ENCODE measurements at regions of chr2 and their contacts with region 1.

Region 1: GRCh38 chr2:105114551-105114950 is 76.7 kb downstream of the MRPS9 start:
- DNase-seq: no peak
- ATAC-seq: peak in 1 of 2 donors; percentile 56
- H3K4me3 ChIP-seq: no peak overlapping the region
- H3K27ac ChIP-seq: no peak overlapping the region
- H3K4me1 ChIP-seq: no peaks in the 10 kb centered on the region
- H3K27me3 ChIP-seq: no peaks in the 10 kb centered on the region
- CTCF ChIP-seq: peak; percentile 24 to 74 (median 49)
- POLR2A ChIP-seq: no peak

Region 2: DNA sequence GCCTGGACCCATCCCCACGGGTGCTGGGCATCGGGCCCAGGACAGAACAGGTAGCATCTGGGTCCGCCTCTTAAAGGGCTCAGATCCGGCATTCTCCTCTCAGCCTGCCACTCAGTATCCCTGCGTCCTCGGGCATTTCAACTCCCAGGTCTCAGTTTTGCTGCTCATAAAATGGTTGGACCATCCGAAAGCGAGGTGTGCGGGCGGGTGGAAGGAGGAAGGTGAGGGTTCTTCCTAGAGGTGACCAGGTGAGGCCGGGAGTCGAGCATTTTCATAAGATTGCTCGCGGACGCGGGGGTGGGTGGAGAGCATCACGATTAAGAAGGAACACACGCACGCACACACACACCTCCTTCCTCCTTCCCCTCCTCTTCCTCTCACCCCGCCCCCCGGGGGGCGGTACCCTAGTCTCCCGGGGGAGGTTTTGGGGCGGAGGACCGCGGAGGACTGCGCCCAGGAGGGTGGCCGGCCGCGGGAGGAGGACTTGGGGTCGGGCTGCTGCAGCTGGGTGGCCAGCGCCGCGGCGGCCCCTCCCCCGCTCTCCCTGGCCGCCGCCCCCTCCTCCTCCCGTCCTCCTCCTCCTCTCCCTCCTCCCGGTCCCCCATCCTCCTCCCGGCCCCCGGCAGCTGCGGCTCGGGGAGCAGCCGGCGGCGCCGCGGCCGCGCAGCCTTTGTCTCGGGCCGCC is 29.1 kb after region 1 on chr2:
- in situ Hi-C with region 1: no loop called
- intact Hi-C with region 1: no loop called
- DNase-seq: no peak
- ATAC-seq: no peak
- H3K4me3 ChIP-seq: peak overlapping the region in 1 of 4 donors; percentile 17
- H3K27ac ChIP-seq: no peak overlapping the region
- H3K4me1 ChIP-seq: peaks cover 0 to 3% of the 10 kb centered on the region in 2 donors
- H3K27me3 ChIP-seq: peaks cover 26 to 34% (median 30%) of the 10 kb centered on the region in 3 donors
- CTCF ChIP-seq: no peak
- POLR2A ChIP-seq: no peak

Region 3: GRCh38 chr2:105235388-105236054 is 121.0 kb after region 1 on chr2:
- in situ Hi-C with region 1: loop called (anchors 5 to 10 kb)
- intact Hi-C with region 1: loop called (anchors 2 kb)
- DNase-seq: peak in 1 of 2 donors; percentile 30
- ATAC-seq: no peak
- H3K4me3 ChIP-seq: no peak overlapping the region
- H3K27ac ChIP-seq: no peak overlapping the region
- H3K4me1 ChIP-seq: no peaks in the 10 kb centered on the region
- H3K27me3 ChIP-seq: peaks cover 0 to 2% (median 0%) of the 10 kb centered on the region in 3 donors
- CTCF ChIP-seq: peak in 4 of 5 experiments; percentile 17 to 57 (median 35)
- POLR2A ChIP-seq: no peak

Region 4: DNA sequence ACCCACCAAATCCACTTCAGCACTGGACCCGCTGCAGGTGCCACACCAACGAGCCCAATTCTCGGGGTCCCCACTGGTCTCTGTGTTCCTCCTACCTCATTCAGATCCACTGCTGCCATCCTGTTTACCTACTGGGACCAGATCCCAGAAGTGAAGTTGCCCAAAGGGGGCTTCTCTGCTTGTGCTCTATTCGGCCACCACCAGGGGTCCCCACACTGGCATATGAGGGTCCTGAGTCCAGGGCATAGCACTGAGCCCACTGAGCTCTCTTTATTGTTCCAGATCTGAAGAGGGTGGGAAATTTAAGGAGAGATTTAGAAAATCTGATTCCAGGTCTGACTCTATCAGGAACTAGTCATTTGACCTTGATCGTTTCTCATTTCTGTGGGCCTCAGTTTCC is 129.4 kb after region 1 on chr2:
- in situ Hi-C with region 1: loop called (anchors 5 to 10 kb)
- intact Hi-C with region 1: loop called (anchors 2 kb)
- DNase-seq: no peak
- ATAC-seq: no peak
- H3K4me3 ChIP-seq: no peak overlapping the region
- H3K27ac ChIP-seq: no peak overlapping the region
- H3K4me1 ChIP-seq: no peaks in the 10 kb centered on the region
- H3K27me3 ChIP-seq: no peaks in the 10 kb centered on the region
- CTCF ChIP-seq: no peak
- POLR2A ChIP-seq: no peak

Measured in gastrocnemius medialis (tissue), 4 donors.